ENCODE measurements at regions of chr11 and their contacts with region 1.

Region 1: DNA sequence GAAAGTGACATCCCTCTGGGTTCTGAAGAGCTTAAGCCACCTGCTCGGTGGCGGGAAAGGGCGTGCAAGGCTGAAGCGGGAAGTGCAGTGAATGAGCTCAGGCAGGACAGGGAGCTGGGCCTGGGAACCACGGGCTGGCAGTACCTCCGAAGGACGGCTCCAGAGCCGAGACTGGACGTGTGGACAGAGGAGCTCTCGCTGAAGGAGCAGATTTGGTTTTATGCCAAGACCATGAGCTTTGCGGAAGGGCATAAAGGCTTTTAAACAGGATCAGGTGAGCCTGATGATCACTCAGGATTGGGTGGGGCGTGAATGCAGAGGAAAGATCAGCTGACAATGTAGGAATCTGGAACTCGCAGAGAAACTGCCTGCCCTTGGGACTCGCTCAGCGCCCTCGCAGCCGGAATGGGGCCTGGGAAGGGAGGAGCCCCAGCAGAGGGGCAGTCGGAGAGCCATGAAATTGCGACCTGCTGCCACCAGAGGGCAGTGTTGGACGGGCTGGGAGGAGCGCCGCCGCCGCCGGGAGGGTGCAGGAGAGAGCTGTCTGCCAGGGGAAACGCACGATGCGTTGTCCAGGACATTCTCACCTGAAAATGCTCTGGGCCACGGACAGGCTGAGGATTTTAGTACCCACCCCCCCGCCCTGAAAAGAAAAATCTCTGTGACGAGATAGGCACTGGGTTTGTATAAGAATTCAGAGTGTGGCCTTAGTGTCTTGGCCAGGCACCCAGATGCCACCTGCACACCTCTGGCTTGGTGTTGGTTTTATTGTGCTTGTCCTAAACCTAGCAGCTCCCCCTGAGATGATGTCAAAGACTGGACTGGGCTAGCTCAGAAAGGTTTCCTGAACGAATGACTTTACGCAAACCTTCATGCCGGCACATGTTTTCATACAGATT is 324.4 kb downstream of the NTM start:
- DNase-seq: peak; percentile 75
- H3K4me3 ChIP-seq: no peak overlapping the region
- H3K27ac ChIP-seq: no peak overlapping the region
- H3K4me1 ChIP-seq: no peaks in the 10 kb centered on the region
- H3K27me3 ChIP-seq: peaks cover 0 to 2% of the 10 kb centered on the region in 2 experiments
- CTCF ChIP-seq: peak; percentile 92 to 97
- POLR2A ChIP-seq: no peak

Region 2: GRCh38 chr11:131644204-131644795 is 50.5 kb before region 1 on chr11:
- CTCF ChIA-PET with region 1: no interaction called
- POLR2A ChIA-PET with region 1: no interaction called
- dilution Hi-C with region 1: no loop called
- intact Hi-C with region 1: no loop called
- DNase-seq: no peak
- H3K4me3 ChIP-seq: no peak overlapping the region
- H3K27ac ChIP-seq: no peak overlapping the region
- H3K4me1 ChIP-seq: no peaks in the 10 kb centered on the region
- H3K27me3 ChIP-seq: no peaks in the 10 kb centered on the region
- CTCF ChIP-seq: no peak
- POLR2A ChIP-seq: no peak

Region 3: GRCh38 chr11:131674051-131674755 is 20.6 kb before region 1 on chr11:
- CTCF ChIA-PET with region 1: interaction called, 13 read pairs
- POLR2A ChIA-PET with region 1: no interaction called
- dilution Hi-C with region 1: no loop called
- intact Hi-C with region 1: no loop called
- DNase-seq: peak; percentile 62
- H3K4me3 ChIP-seq: no peak overlapping the region
- H3K27ac ChIP-seq: no peak overlapping the region
- H3K4me1 ChIP-seq: no peaks in the 10 kb centered on the region
- H3K27me3 ChIP-seq: peaks cover 0 to 4% of the 10 kb centered on the region in 2 experiments
- CTCF ChIP-seq: peak; percentile 94 to 96
- POLR2A ChIP-seq: no peak

Region 4: DNA sequence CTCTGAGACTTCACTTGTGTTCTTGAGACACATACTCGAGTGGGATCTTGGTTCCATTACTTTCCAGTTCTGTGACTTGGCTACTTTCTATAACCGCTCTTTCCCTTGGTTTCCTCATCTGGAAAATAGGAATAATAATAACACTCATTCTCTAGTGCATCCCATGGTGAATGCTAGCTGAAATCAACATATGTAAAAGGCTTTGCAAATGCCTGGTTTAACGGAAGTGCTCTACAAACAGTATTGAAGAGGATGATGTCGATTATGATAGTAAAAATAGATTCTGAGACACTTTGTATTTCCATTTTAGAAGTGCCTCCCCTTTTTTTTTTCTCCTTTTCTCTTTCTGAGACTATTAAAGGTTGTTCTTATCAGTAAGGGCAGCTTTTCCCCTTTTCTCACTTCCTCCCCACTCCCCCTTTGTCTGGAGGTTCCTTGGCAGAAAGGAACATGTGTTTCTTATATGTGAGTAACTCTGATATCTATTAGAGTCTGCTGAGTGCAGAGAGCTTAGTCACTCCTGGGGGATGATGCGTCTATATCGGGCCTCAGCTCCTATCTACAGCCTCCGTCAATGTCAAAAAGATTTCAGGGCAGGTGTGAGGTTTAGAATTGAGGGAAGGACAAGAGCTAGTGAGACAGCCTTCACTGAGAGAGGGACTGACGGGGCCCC is 164.9 kb after region 1 on chr11:
- CTCF ChIA-PET with region 1: interaction called, 49 read pairs
- POLR2A ChIA-PET with region 1: no interaction called
- dilution Hi-C with region 1: no loop called
- intact Hi-C with region 1: no loop called
- DNase-seq: peak; percentile 90
- H3K4me3 ChIP-seq: no peak overlapping the region
- H3K27ac ChIP-seq: peak overlapping the region; percentile 93
- H3K4me1 ChIP-seq: peaks cover 54% of the 10 kb centered on the region
- H3K27me3 ChIP-seq: no peaks in the 10 kb centered on the region
- CTCF ChIP-seq: no peak
- POLR2A ChIP-seq: no peak

Region 5: GRCh38 chr11:131910523-131911387 is 216.0 kb after region 1 on chr11:
- CTCF ChIA-PET with region 1: interaction called, 263 read pairs
- POLR2A ChIA-PET with region 1: no interaction called
- dilution Hi-C with region 1: no loop called
- intact Hi-C with region 1: loop called (anchors 1 kb)
- DNase-seq: peak; percentile 43
- H3K4me3 ChIP-seq: peak overlapping the region; percentile 49 to 76 (median 64)
- H3K27ac ChIP-seq: peak overlapping the region; percentile 19
- H3K4me1 ChIP-seq: peaks cover 5% of the 10 kb centered on the region
- H3K27me3 ChIP-seq: peaks cover 0 to 10% of the 10 kb centered on the region in 2 experiments
- CTCF ChIP-seq: no peak
- POLR2A ChIP-seq: no peak

Region 6: DNA sequence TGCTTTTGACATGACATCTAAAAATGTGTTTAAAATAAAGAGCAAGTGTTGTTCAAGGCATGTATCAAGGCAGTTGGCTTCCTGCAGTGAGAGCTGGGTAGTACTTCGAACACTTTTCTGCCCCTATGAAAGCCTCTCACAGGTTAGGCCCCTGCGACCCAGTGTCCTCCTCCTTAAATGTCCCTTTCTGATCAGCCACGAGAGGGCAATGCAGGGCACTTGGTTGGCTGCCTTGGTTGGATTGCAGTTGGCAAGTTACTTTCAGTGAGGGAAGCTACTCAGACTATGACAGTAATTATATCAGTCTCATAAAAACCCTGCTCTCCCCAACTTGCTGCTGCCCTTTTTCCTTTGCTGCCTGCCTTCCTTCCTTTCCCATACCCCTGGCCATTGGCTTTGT is 419.4 kb after region 1 on chr11:
- CTCF ChIA-PET with region 1: interaction called, 12 read pairs
- POLR2A ChIA-PET with region 1: no interaction called
- dilution Hi-C with region 1: no loop called
- intact Hi-C with region 1: no loop called
- DNase-seq: peak; percentile 44
- H3K4me3 ChIP-seq: no peak overlapping the region
- H3K27ac ChIP-seq: no peak overlapping the region
- H3K4me1 ChIP-seq: peaks cover 9% of the 10 kb centered on the region
- H3K27me3 ChIP-seq: no peaks in the 10 kb centered on the region
- CTCF ChIP-seq: peak in 1 of 2 donors; percentile 53
- POLR2A ChIP-seq: no peak

Region 7: GRCh38 chr11:133064152-133064877 is 1369.5 kb after region 1 on chr11:
- CTCF ChIA-PET with region 1: interaction called, 19 read pairs
- POLR2A ChIA-PET with region 1: no interaction called
- dilution Hi-C with region 1: no loop called
- intact Hi-C with region 1: loop called (anchors 1 kb)
- DNase-seq: peak; percentile 48
- H3K4me3 ChIP-seq: peak overlapping the region; percentile 14 to 64 (median 42)
- H3K27ac ChIP-seq: peak overlapping the region; percentile 12
- H3K4me1 ChIP-seq: peaks cover 8% of the 10 kb centered on the region
- H3K27me3 ChIP-seq: no peaks in the 10 kb centered on the region
- CTCF ChIP-seq: peak; percentile 63 to 68
- POLR2A ChIP-seq: no peak

Measured in endothelial cell of umbilical vein (primary cell).